Lower lobe of right lung (tissue), 2 donors: ENCODE measurements at regions of chr17 and their contacts with region 1.

Region 1: GRCh38 chr17:4739122-4740024 is at the starts of genes CXCL16 and ZMYND15:
- DNase-seq: peak; percentile 81
- ATAC-seq: peak; percentile 83 to 86
- H3K4me3 ChIP-seq: peak within 1 kb of the TSS; percentile 90
- H3K27ac ChIP-seq: peak within 1 kb of the TSS; percentile 84
- H3K4me1 ChIP-seq: peaks cover 22% of the 10 kb centered on the region
- H3K27me3 ChIP-seq: peaks cover 2% of the 10 kb centered on the region
- CTCF ChIP-seq: no peak
- total RNA-seq, gene CXCL16: 249 TPM
- total RNA-seq, gene ZMYND15: 13.3 TPM

Region 2: GRCh38 chr17:4789901-4790704 is 50.7 kb after region 1 on chr17:
- intact Hi-C with region 1: loop called (anchors 10 kb)
- DNase-seq: peak; percentile 90
- ATAC-seq: peak; percentile 94 to 95
- H3K4me3 ChIP-seq: peak overlapping the region; percentile 76
- H3K27ac ChIP-seq: peak overlapping the region; percentile 96
- H3K4me1 ChIP-seq: peaks cover 31% of the 10 kb centered on the region
- H3K27me3 ChIP-seq: peaks cover 11% of the 10 kb centered on the region
- CTCF ChIP-seq: peak; percentile 82